ENCODE measurements at regions of chr5 and their contacts with region 1.

Region 1: DNA sequence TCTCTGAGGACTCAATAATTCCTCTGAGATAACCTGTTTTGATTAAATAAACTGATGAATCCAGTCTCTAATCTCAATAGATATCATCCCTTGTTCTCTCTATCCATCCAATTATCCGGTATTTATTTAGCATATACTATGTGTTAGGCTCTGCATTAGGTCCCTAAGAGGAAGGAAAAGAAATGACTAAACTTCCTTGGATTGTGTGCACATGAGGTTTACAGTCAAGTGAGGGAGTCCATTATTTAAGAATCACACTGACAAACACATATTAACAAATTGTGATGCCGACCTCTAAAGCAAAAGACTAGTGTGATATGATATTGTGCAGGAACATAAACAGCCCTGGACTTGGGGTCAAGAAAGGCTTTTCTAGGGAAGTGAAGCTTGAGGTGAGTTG is 140.8 kb downstream of the HMHB1 start:
- DNase-seq: no peak
- H3K4me3 ChIP-seq: no peak overlapping the region
- CTCF ChIP-seq: no peak
- POLR2A ChIP-seq: no peak

Region 2: DNA sequence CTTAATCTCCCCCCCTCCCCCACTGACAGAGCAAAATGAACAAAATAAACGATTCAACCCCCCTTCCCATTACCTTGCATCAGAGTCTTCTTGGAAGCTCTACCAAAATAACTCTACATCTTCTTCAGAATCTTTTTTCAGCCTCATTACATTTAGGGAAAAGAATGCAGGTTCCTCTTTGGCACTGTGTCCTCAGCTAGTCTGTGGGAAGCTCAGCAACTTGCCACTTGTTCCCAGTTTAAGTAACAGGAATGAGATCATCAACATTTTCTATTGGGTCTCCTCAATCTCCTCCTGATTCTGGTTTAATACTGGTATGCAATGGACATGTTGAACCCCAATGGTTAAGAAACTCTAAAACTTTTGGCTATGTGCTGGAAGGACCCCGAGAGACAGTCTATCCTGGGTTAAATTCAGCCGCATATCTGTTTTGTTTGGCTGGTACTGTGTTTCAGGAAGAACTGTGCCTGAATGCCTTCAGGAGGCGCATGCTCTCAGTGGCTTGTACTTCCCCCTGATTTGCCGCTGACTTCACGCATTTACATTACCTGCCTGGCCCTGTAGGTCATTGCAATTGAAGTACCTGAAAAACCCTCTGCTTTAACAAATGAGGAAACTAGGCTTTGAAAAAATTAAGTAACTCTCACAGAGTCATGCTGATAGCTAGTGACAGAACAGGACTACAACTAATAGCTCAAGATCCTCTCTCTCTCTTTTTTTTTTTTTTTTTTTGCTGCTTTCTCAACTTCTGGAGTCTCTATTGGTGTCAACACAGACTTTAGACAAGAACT is 218.9 kb before region 1 on chr5:
- intact Hi-C with region 1: loop called (anchors 5 kb)
- DNase-seq: no peak
- H3K4me3 ChIP-seq: no peak overlapping the region
- CTCF ChIP-seq: no peak
- POLR2A ChIP-seq: no peak

Measured in lower leg skin (tissue), 4 donors.